ENCODE measurements at regions of chr18 and their contacts with region 1.

Region 1: DNA sequence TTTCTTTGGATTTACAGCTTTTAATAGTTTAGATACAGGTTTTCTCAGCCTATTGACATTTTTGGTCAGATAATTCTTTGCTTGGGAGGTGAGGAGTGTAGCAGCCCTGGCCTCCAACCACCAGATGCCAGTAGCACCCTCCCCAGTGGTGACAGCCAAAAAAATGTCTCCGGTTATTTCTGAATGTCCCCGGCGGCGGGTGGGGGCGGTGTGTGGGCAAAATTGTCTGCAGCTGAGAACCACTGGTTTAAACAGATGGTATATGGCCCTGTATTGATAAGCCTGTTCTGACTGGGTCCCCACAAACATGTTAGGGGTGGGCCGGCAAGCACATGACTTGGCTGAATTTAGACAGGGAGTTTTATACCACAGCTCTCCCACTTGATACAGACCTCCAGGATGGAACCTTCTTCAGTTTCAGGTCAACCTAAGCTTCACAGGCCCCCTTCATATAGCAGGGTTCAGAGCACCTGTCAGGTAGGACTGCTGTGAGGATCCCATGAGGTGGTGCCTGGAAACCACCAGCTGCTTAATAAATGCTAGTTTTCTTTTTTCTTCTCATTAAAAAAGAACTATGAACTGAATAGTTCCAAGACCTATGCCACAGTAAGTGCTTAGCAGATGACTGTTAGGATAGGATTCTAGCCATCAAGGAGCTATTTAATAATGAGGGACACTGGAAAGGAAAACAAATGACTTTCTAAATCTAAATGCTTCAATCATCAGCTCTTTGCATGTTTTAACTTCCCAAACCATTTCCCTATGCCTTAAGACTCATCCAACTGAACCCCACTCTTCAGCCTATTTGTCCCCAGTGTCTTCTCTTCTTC is 18.1 kb downstream of the LPIN2 start:
- DNase-seq: peak; percentile 79
- ATAC-seq: peak; percentile 77
- H3K4me3 Mint-ChIP-seq: peak overlapping the region; percentile 46
- H3K27ac Mint-ChIP-seq: peak overlapping the region; percentile 57
- H3K4me1 Mint-ChIP-seq: peaks cover 77% of the 10 kb centered on the region
- H3K27me3 Mint-ChIP-seq: no peaks in the 10 kb centered on the region

Region 2: GRCh38 chr18:2672410-2672809 is 322.4 kb before region 1 on chr18:
- CTCF ChIA-PET with region 1: no interaction called
- POLR2A ChIA-PET with region 1: no interaction called
- DNase-seq: no peak
- ATAC-seq: no peak
- H3K4me3 Mint-ChIP-seq: no peak overlapping the region
- H3K27ac Mint-ChIP-seq: no peak overlapping the region
- H3K4me1 Mint-ChIP-seq: peaks cover 27% of the 10 kb centered on the region
- H3K27me3 Mint-ChIP-seq: no peaks in the 10 kb centered on the region

Region 3: DNA sequence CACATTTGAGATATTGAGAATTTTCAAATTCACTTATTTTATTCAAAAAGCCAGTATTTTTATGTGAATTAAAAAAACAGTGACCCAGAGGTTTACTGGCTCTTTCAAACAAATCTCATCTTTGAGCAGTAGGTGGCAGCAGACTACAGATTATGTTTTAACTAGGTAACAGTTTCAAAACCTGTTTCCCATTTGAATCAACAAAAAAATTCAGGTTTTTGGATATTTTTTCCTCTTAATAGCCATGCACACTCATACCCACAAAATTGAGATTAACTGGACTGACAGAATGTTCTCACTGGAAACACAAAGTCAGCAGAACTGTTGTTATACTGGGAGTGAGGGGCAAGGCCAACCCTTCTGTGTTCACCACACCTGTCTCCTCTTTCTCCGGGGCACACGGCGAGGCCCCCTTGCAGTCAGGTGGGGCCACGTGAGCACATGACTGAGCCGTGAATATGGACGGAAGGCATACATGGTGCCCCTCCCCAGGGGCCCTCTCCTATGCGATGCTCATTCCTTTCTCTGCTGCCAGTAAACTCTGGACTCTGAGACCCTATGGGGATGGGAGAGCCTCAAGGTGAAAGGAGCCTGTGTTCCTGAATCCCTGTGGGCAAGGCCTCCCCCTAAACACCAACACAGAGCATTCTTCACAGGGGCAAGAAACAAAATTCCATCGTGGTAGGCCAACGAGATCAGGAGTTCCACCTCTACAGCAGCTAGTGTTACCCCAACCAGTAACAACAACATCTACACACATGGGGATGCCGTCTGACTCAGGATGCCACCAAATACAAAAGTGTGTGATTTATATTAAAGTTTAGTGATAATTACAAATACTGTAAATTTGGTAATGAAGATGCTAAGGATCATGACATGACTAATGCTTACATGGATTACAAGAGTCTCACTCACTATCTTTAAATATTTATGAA is 62.3 kb before region 1 on chr18:
- CTCF ChIA-PET with region 1: interaction called, 136 read pairs
- POLR2A ChIA-PET with region 1: interaction called, 4 read pairs
- DNase-seq: peak; percentile 75
- ATAC-seq: peak; percentile 73
- H3K4me3 Mint-ChIP-seq: no peak overlapping the region
- H3K27ac Mint-ChIP-seq: peak overlapping the region; percentile 67
- H3K4me1 Mint-ChIP-seq: peaks cover 26% of the 10 kb centered on the region
- H3K27me3 Mint-ChIP-seq: no peaks in the 10 kb centered on the region

Region 4: DNA sequence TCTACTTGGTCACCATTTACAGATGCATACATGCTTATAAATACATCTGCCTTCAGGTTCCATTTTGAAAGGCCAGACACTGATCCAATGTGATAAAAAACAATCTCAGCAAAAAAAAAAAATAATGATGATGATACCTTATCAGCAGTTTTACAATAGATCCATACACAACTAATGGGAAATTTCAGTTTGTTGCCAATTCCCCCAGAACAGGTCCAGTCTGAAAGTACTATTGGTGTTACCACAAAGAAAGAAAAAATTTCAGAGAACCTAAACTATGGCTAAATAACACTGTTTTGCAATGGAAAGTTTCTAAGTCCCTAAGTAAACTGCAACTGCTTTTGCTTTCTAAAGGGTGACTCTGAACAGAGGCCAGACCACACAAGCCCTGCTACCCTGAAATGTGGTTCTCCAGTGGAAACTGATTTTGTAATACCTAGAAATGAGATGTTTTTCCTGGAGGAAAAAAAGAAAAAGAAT is 36.0 kb before region 1 on chr18:
- CTCF ChIA-PET with region 1: interaction called, 25 read pairs
- POLR2A ChIA-PET with region 1: interaction called, 7 read pairs
- DNase-seq: peak; percentile 78
- ATAC-seq: peak; percentile 56
- H3K4me3 Mint-ChIP-seq: peak overlapping the region; percentile 72
- H3K27ac Mint-ChIP-seq: peak overlapping the region; percentile 95
- H3K4me1 Mint-ChIP-seq: peaks cover 89% of the 10 kb centered on the region
- H3K27me3 Mint-ChIP-seq: no peaks in the 10 kb centered on the region

Region 5: GRCh38 chr18:2978646-2979045 is 16.2 kb before region 1 on chr18:
- CTCF ChIA-PET with region 1: interaction called, 90 read pairs
- POLR2A ChIA-PET with region 1: interaction called, 8 read pairs
- DNase-seq: no peak
- ATAC-seq: no peak
- H3K4me3 Mint-ChIP-seq: peak overlapping the region; percentile 81
- H3K27ac Mint-ChIP-seq: peak overlapping the region; percentile 80
- H3K4me1 Mint-ChIP-seq: peaks cover 73% of the 10 kb centered on the region
- H3K27me3 Mint-ChIP-seq: no peaks in the 10 kb centered on the region

Region 6: DNA sequence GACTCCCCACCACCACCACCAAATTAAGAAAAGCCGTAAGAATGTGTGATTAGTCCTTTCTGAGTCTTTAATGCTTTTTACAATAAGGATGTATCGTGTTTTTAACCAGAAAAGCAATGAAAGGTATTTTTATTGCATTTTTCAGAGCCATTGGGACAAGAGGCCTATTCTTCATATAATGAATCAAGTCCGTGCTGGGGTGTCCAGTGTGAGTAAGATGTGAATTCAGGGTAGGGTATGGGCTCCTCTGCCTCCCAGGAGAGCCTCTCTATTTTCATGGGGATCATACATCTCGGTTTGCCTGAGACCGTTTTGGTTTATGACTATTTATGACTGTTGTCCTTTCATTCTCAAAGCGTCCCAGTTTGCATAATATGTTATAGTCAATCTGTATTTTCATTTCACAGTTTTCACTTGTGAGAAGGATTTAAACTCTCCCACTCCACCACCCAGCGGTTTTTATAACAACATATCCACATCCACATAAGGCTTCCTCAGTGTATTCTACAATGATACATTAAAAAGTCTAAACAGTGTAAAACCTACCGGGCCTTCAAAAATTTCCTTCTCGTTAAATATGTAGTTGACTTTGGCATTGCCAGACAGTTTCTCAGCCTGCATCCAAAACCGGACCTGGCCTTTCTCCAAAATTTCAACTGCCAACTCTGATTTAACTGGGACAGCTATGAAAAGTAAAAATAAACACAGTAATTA is 99.0 kb after region 1 on chr18:
- CTCF ChIA-PET with region 1: interaction called, 14 read pairs
- POLR2A ChIA-PET with region 1: interaction called, 3 read pairs
- DNase-seq: no peak
- ATAC-seq: no peak
- H3K4me3 Mint-ChIP-seq: no peak overlapping the region
- H3K27ac Mint-ChIP-seq: no peak overlapping the region
- H3K4me1 Mint-ChIP-seq: peaks cover 31% of the 10 kb centered on the region
- H3K27me3 Mint-ChIP-seq: no peaks in the 10 kb centered on the region

Region 7: DNA sequence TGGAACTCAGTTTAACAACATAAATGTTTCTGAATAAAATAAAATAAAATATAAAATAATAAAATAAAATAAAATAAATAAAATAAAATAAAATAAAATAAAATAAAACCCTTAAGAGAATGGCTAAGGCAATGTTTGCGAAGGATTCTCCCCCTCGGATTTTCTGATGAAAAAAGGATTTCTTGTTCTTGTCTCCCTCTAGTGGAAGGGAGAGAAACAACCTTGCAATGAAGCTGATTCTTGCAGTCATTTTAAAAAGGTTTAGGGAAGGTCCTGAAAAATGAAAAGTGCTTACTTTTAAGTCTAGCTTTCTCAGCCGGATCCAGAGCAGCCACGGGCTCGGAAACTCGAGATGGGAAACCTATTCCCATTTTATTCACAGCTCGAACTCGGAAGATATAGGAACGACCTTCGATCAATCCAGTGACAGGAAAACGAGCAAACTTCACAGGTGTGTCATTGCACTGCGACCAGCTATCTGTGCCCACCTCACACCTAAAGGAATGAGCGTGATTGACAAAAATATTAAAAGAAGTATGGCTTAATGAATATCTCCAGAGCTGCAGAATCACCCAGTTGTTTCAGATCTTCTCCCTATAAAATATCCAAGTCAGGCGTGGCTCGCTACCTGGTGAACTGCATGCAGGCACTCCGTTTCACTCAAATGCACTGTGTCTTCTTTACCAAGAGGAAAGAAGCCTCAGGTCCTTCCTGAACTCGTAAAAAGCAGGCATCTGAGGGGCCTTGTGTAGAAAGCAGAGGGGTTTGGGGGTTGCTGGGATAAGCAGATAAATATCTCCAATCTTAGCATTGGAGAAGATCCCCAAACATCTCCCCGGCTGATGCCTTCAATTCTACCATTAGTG is 156.8 kb after region 1 on chr18:
- CTCF ChIA-PET with region 1: interaction called, 45 read pairs
- POLR2A ChIA-PET with region 1: no interaction called
- DNase-seq: no peak
- ATAC-seq: no peak
- H3K4me3 Mint-ChIP-seq: no peak overlapping the region
- H3K27ac Mint-ChIP-seq: no peak overlapping the region
- H3K4me1 Mint-ChIP-seq: no peaks in the 10 kb centered on the region
- H3K27me3 Mint-ChIP-seq: no peaks in the 10 kb centered on the region

Measured in activated CD8-positive, alpha-beta T cell treated with anti-CD3 and anti-CD28 coated beads, Interleukin-2, amount 10 ng/mL, durations not matched to agents 7 days and 5 days (primary cell).